ENCODE measurements at regions of chr10 and their contacts with region 1.

Region 1: GRCh38 chr10:15901889-15902288 is 41.6 kb upstream of the MINDY3 start:
- DNase-seq: no peak
- H3K4me3 Mint-ChIP-seq: no peak overlapping the region
- H3K27ac Mint-ChIP-seq: no peak overlapping the region
- H3K4me1 Mint-ChIP-seq: no peaks in the 10 kb centered on the region
- H3K27me3 Mint-ChIP-seq: peaks cover 23% of the 10 kb centered on the region
- CTCF ChIP-seq: no peak

Region 2: DNA sequence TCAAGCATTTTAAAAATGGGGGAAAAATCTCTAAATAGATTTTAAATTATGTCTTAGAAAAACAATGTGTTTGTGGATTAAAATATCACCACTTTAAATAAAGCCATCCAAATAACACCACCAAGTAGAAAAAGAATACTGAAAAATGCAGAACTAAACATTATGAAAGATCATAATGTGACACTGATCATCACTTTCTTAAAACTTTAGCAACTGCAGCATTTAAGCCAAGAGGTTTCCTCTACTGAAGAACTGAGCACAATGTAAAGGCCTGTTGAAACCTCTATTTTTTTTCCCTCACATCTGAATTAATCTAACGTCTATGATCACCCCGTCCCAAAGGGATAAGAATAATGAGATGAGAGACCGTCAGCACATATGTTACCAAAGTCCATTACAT is 60.2 kb before region 1 on chr10:
- CTCF ChIA-PET with region 1: no interaction called
- intact Hi-C with region 1: no loop called
- DNase-seq: no peak
- H3K4me3 Mint-ChIP-seq: no peak overlapping the region
- H3K27ac Mint-ChIP-seq: no peak overlapping the region
- H3K4me1 Mint-ChIP-seq: no peaks in the 10 kb centered on the region
- H3K27me3 Mint-ChIP-seq: no peaks in the 10 kb centered on the region
- CTCF ChIP-seq: no peak

Region 3: DNA sequence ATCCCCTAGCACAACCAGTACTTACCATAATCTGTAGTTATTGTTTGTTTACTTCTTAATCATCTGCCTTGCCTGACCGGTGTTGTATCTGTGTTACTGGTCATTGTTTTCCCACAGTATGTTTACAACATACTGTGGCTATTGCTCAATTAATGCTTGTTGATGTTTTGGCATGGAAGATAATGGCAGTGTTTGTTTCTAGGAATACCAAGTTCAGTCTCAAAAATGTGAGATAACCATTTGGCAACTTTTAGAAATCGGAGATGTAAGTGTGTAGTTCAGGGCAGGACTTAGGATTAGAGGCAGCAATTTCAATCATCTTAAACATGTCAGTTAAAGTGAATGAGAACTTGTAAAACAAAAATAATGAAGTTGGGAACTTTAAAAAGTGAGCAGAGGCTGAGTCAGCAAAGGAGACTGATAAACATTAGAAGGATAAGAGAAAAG is 49.8 kb before region 1 on chr10:
- CTCF ChIA-PET with region 1: no interaction called
- intact Hi-C with region 1: no loop called
- DNase-seq: no peak
- H3K4me3 Mint-ChIP-seq: no peak overlapping the region
- H3K27ac Mint-ChIP-seq: no peak overlapping the region
- H3K4me1 Mint-ChIP-seq: peaks cover 12% of the 10 kb centered on the region
- H3K27me3 Mint-ChIP-seq: no peaks in the 10 kb centered on the region
- CTCF ChIP-seq: no peak

Region 4: DNA sequence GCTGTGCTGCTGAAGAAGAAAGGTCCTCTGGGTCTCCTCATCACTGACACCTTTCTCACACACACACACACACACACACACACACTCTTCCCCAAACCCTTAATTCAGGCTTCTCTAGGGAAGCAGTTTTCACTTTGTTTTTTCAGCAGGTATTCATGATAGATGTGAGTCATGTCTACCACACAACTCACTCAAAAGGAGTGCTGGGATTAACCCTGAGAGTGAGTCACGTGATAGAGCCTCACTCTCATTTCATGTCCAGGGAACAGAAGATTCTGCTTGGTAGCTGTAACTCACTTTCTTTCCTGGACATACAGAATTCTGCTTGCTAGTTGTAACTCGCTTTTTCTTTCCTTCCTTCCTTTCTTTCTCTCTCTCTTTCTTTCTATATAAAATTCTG is 1371.5 kb after region 1 on chr10:
- CTCF ChIA-PET with region 1: no interaction called
- intact Hi-C with region 1: loop called (anchors 5 kb)
- DNase-seq: peak; percentile 3
- H3K4me3 Mint-ChIP-seq: no peak overlapping the region
- H3K27ac Mint-ChIP-seq: no peak overlapping the region
- H3K4me1 Mint-ChIP-seq: no peaks in the 10 kb centered on the region
- H3K27me3 Mint-ChIP-seq: no peaks in the 10 kb centered on the region
- CTCF ChIP-seq: no peak